HCT116 (cell line): ENCODE measurements at regions of chr20 and their contacts with region 1.

Region 1: GRCh38 chr20:32155017-32155981 is 45.8 kb downstream of the TM9SF4 start:
- DNase-seq: no peak
- ATAC-seq: peak; percentile 64
- H3K4me3 ChIP-seq: no peak overlapping the region
- H3K27ac ChIP-seq: no peak overlapping the region
- H3K4me1 ChIP-seq: no peaks in the 10 kb centered on the region
- H3K27me3 ChIP-seq: no peaks in the 10 kb centered on the region
- CTCF ChIP-seq: peak in 2 of 3 experiments; percentile 11 to 25; a peak in 1 of 6 replicates
- POLR2A ChIP-seq: no peak
- RAD21 ChIP-seq: peak; percentile 29; the same call in 1 of the 2 replicates

Region 2: GRCh38 chr20:32040142-32041022 is 114.9 kb before region 1 on chr20:
- CTCF ChIA-PET with region 1: no interaction called
- POLR2A ChIA-PET with region 1: no interaction called
- RAD21 ChIA-PET with region 1: no interaction called
- intact Hi-C with region 1: no loop called
- DNase-seq: no peak
- ATAC-seq: no peak
- H3K4me3 ChIP-seq: no peak overlapping the region
- H3K27ac ChIP-seq: no peak overlapping the region
- H3K4me1 ChIP-seq: no peaks in the 10 kb centered on the region
- H3K27me3 ChIP-seq: peaks cover 29% of the 10 kb centered on the region
- CTCF ChIP-seq: no peak
- POLR2A ChIP-seq: no peak
- RAD21 ChIP-seq: no peak

Region 3: GRCh38 chr20:32189691-32190615 is 34.7 kb after region 1 on chr20:
- CTCF ChIA-PET with region 1: no interaction called
- POLR2A ChIA-PET with region 1: no interaction called
- RAD21 ChIA-PET with region 1: no interaction called
- intact Hi-C with region 1: no loop called
- DNase-seq: no peak
- ATAC-seq: no peak
- H3K4me3 ChIP-seq: no peak overlapping the region
- H3K27ac ChIP-seq: no peak overlapping the region
- H3K4me1 ChIP-seq: no peaks in the 10 kb centered on the region
- H3K27me3 ChIP-seq: no peaks in the 10 kb centered on the region
- CTCF ChIP-seq: no peak
- POLR2A ChIP-seq: no peak
- RAD21 ChIP-seq: no peak

Region 4: DNA sequence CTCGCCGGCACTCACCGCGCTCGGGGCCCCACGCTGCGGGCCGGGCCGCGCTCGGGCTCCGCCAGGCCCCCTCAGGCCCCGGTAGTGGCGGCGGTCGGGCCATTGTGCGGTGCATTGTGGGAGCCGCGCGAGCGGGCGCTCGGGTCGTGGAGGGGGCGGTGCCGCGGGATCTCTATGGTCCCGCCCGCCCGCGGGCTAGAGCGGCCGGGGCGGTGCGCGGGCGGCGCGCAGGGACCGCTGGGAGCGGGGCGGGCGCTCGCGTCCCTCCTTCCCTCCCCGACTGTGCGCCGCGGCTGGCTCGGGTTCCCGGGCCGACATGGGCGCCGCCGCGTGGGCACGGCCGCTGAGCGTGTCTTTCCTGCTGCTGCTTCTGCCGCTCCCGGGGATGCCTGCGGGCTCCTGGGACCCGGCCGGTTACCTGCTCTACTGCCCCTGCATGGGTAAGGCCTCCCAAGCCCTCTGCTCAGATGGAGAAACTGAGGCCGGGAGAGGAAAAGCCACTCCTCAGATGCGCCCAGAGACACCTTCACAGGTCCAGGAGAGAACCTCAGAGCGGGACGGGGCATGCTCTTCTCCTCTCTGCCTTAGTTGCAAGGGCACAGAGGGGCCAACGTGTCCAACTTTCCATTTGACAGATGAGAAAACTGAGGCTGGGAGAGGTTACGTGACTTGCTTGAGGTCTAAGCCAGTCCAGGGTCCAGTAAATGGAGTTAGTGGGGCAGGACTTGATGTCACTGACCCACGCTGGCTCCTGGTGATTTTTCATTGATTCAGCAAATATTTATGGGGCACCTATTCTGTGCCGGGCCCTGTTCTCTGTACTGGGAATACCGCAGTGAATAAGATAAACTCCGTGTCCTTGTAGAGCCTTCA is 52.6 kb after region 1 on chr20 and contains the starts of genes PLAGL2 and POFUT1:
- CTCF ChIA-PET with region 1: no interaction called
- POLR2A ChIA-PET with region 1: no interaction called
- RAD21 ChIA-PET with region 1: no interaction called
- intact Hi-C with region 1: loop called (anchors 10 kb)
- DNase-seq: peak; percentile 61
- ATAC-seq: peak; percentile 99
- H3K4me3 ChIP-seq: peak within 1 kb of the TSS; percentile 68 to 100
- H3K27ac ChIP-seq: peak within 1 kb of the TSS; percentile 89
- H3K4me1 ChIP-seq: peaks cover 6 to 27% of the 10 kb centered on the region in 2 experiments; a peak in 3 of 4 replicates
- H3K27me3 ChIP-seq: no peaks in the 10 kb centered on the region
- CTCF ChIP-seq: no peak
- POLR2A ChIP-seq: no peak
- RAD21 ChIP-seq: no peak
- total RNA-seq, gene PLAGL2: 18.3 TPM
- total RNA-seq, gene POFUT1: 34.5 TPM